ENCODE measurements at regions of chr3 and their contacts with region 1.

Region 1: DNA sequence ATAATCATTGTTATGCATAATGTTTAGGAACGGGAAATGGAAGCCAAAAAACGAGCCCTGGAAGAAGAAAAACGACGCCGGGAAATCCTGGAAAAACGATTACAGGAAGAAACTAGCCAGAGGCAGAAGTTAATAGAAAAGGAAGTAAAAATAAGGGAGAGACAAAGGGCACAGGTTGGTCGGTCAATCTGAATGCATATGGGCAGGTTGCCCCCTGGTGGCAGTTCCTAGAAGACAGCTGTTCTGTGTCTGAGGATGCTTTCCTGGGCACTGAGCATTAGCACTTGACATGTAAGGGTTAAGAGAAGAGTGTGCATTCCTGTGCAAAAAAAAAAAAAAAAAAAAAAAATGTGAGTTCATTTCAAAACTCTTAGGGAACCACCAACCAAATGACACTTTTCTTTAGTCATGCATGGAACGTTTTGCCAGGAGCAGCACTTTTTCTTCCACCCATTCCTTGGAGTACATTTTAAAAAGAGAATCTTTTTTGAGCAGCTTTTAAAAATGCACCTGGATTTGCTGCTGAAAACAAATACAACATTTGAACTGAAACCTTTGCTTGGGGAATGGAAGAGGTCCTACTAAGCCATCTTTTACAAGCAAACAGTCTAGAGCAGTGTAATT is 11.1 kb upstream of the ABHD10 start:
- DNase-seq: peak; percentile 88 to 96
- H3K4me3 ChIP-seq: no peak overlapping the region
- CTCF ChIP-seq: peak in 1 of 3 donors; percentile 91
- POLR2A ChIP-seq: no peak

Region 2: DNA sequence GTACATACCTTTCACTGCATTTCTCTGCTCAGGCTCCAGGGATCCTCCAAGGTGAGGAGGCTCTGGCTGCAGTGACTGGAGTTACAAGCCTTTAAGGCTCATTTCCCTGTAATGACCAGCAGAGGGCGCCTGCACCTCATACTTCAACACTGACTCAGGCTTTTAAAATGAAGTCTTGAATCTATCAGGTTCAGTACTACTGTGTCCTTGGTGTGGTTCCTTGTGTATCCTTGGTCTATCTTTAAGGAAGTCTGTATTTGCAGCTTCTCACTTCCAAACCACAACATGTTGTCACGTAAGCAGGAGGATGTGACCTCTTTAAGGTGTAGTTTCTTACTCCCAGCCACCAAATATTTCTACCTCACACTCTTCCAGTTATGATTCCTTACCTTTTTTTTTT is 250.2 kb before region 1 on chr3:
- intact Hi-C with region 1: loop called (anchors 5 kb)
- DNase-seq: peak; percentile 80 to 95
- H3K4me3 ChIP-seq: no peak overlapping the region
- CTCF ChIP-seq: peak in 1 of 3 donors; percentile 95
- POLR2A ChIP-seq: no peak

Region 3: DNA sequence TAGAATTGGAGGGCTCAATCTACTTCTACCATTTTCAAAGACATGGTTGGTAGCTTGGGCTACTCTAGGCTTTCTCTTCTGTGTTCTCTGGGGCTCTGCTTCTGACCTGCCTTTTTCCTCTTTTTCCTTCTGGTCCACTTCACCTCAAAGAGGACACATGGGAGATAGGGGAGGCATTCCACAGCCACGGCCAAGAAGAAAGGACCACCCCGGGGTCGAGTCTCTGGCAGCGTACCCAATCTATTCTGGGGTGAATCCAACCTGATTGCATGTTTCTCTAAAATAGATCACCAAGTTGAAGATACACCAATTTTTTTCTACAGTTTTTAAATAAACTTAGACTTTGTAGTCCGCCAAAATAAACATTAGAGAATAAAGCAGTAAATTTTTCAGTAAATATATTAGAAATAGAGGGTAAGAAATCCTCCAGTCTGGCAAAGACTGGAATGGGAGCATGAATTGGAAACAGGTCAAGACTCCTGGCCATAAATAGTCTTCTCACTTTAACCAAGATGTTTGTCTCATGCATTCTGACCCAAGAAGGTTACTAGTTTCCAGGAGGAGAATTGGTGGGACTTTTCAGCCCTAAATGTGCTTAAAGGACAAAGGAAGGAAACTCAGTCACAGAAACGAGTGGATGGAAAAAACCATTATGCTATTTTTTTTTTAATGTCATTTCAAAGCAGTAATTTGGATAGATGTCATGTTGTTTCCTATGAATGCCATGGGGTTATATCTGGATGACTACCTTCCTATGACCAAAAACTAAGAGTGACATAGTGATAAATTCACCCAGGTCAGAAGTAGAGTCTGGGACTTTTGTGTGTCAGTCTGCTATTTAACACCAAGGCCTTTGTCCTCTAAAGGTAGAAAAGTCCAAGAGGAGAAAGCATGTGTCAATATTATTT is 180.0 kb before region 1 on chr3:
- intact Hi-C with region 1: no loop called
- DNase-seq: no peak
- H3K4me3 ChIP-seq: no peak overlapping the region
- CTCF ChIP-seq: no peak
- POLR2A ChIP-seq: no peak

Region 4: GRCh38 chr3:111890051-111890580 is 77.6 kb before region 1 on chr3:
- intact Hi-C with region 1: no loop called
- DNase-seq: no peak
- H3K4me3 ChIP-seq: no peak overlapping the region
- CTCF ChIP-seq: no peak
- POLR2A ChIP-seq: no peak

Region 5: DNA sequence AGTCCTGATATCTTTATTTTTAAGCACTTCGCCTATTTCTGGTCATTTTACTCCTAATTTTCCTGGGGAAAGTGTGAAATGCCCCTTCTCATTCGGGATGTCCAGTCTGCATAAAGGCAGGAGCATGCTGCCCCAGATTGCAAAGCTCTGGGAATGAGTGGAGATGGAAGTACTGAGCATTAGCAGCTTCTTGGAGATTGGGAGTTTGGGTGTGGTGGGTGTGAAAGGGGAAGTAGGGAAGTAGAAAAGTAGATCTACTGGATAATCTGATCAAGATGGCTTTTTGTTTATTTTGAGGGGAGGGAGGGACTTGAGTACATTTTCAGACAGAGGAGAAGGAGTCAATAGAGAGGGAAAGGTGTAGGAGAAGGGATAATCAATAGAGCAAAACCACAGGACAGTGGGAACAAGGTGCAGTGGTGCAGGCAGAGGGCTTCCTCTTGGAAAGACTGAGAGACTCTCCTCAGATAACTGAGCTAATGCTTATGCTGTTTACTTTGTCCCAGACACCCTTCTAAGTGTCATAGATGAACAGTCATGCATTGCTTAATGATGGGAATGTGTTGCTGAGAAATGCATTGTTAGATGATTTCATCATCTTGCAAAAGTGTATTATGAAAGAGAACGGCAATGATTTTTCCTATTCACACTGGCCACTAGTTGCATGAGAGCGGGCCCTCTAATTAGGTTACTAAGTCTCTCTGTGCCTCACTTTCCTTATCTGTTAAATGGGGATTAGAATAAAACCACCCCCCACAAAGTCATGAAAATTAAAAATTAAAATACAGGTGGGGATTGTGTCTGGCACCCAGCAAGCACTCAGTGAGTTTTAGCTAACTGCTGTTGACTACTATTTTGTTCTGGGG is 63.2 kb before region 1 on chr3:
- intact Hi-C with region 1: no loop called
- DNase-seq: no peak
- H3K4me3 ChIP-seq: no peak overlapping the region
- CTCF ChIP-seq: no peak
- POLR2A ChIP-seq: no peak

Measured in lower leg skin (tissue), 4 donors.